Heart right ventricle (tissue), 16 donors: ENCODE measurements at regions of chr9 and their contacts with region 1.

Region 1: DNA sequence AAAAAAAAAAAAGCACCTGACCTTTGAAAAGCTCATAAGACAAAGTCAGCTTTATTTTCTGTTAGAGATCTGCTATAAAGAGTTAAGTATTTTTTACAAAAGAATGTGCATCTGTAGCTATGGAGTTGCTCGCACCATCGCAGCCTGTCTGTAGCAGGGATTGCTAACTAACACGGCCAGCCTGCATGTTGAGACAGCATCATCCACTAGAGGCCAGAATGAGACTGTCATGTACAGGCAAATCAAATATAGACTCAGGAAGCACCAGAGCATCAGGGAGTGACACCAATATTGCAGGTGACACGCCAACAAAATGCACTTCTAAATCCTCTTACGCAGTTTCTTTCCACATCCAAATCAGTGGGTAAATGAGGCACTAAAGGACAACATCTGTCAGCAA is 136.3 kb upstream of the RASEF start:
- DNase-seq: peak in 1 of 2 donors; percentile 51
- ATAC-seq: peak; percentile 85 to 94 (median 90)
- H3K4me3 ChIP-seq: no peak overlapping the region
- H3K27ac ChIP-seq: no peak overlapping the region
- H3K4me1 ChIP-seq: peaks cover 0 to 9% (median 0%) of the 10 kb centered on the region in 9 donors
- H3K27me3 ChIP-seq: peaks cover 0 to 21% (median 7%) of the 10 kb centered on the region in 7 donors
- CTCF ChIP-seq: peak; percentile 14 to 80 (median 64)

Region 2: GRCh38 chr9:83119873-83120272 is 79.4 kb before region 1 on chr9:
- intact Hi-C with region 1: no loop called
- DNase-seq: no peak
- ATAC-seq: no peak
- H3K4me3 ChIP-seq: no peak overlapping the region
- H3K27ac ChIP-seq: no peak overlapping the region
- H3K4me1 ChIP-seq: no peaks in the 10 kb centered on the region
- H3K27me3 ChIP-seq: no peaks in the 10 kb centered on the region
- CTCF ChIP-seq: no peak

Region 3: DNA sequence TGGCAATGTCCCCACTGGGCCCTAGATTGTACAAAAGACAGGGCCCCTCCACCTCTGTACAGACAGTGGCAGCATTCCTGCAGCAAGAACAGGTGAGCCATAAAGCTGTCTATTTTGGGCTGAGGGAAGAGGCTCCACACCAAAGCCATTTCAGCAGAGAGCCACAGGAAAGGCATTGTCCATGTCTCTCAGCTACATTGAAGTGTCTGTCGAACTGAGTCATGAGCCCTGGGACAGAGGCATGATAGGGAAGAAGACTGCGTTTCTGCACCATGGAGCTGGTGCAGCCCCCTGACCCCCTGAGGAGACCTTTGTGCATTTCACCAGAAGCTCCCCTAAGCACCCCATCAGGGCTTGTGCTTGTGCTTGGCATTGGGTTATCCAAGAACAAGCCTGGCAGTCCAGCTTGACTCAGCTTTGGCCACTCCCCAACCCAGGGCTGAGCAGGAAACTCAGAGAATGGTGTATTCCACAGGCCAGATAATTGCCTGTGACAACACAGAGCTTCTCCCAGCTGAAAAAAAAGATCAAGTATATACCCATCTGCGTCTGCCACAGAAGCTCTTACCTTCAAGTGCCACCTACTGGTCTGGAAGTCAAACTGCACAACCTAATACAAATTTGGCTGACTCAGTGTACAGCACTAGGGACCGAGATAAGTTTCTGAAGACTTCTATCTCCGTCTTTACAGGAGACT is 344.9 kb after region 1 on chr9:
- intact Hi-C with region 1: loop called in 3 of 10 experiments (anchors 5 to 10 kb)
- DNase-seq: peak; percentile 36 to 39
- ATAC-seq: peak; percentile 83 to 94 (median 87)
- H3K4me3 ChIP-seq: no peak overlapping the region
- H3K27ac ChIP-seq: no peak overlapping the region
- H3K4me1 ChIP-seq: peaks cover 0 to 15% (median 5%) of the 10 kb centered on the region in 9 donors
- H3K27me3 ChIP-seq: no peaks in the 10 kb centered on the region
- CTCF ChIP-seq: peak; percentile 59 to 82 (median 78)

Region 4: DNA sequence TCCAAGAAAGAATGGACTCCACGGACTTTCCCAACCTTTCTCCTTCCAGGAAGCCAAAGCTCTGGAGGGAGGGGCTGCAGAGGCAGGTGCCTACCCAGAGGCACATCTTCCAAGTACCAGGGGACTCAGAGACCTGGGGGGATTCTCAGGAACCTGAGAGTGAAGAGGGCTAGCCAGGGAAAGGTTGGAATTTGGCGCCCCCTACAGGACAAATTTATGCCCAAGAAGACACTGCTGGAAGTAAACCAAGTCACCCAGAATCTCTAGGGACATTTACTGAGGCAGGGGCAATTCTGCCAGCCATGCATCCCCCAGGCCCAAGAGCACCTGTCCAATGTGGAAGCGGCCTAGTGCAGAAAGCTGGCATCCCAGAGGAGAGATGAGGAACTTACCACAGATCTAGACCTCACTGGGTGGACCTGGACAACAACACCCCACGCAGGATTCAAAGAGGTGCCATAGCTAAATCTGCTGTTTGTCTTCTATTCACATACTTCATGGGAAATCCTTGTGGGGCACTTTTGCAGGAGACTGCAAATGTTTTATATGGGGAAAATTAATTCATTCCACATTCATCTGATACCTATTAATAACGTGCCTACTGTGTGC is 397.8 kb after region 1 on chr9:
- intact Hi-C with region 1: loop called in 1 of 10 experiments (anchors 5 kb)
- DNase-seq: peak in 1 of 2 donors; percentile 32
- ATAC-seq: peak in 2 of 8 donors; percentile 42 to 55
- H3K4me3 ChIP-seq: no peak overlapping the region
- H3K27ac ChIP-seq: no peak overlapping the region
- H3K4me1 ChIP-seq: peaks cover 0 to 11% (median 0%) of the 10 kb centered on the region in 9 donors
- H3K27me3 ChIP-seq: no peaks in the 10 kb centered on the region
- CTCF ChIP-seq: peak; percentile 51 to 80 (median 66)

Region 5: DNA sequence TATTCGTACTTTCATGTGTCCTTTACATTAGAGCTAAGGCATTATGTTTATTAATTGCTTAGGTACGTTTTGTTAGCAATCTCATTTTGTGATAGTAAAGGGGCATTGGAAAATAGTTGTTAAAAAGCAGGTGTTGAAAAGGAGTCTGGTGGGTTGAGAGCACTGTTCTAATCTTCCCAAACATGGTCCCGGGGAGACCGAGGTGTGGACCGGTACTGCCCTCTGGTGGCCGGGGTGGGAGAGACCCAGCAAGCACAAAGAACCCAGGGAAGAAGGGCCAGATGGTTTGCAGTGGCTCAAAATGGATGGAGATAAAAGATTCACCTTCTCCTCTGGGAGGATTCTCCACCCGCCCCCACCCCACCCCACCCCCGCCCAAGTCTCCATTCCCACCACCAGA is 449.8 kb after region 1 on chr9:
- intact Hi-C with region 1: loop called in 1 of 10 experiments (anchors 5 kb)
- DNase-seq: peak; percentile 58 to 75
- ATAC-seq: peak; percentile 65 to 89 (median 82)
- H3K4me3 ChIP-seq: no peak overlapping the region
- H3K27ac ChIP-seq: peak overlapping the region in 1 of 10 donors; percentile 37
- H3K4me1 ChIP-seq: peaks cover 0 to 11% (median 0%) of the 10 kb centered on the region in 9 donors
- H3K27me3 ChIP-seq: no peaks in the 10 kb centered on the region
- CTCF ChIP-seq: peak; percentile 54 to 78 (median 76)

Region 6: DNA sequence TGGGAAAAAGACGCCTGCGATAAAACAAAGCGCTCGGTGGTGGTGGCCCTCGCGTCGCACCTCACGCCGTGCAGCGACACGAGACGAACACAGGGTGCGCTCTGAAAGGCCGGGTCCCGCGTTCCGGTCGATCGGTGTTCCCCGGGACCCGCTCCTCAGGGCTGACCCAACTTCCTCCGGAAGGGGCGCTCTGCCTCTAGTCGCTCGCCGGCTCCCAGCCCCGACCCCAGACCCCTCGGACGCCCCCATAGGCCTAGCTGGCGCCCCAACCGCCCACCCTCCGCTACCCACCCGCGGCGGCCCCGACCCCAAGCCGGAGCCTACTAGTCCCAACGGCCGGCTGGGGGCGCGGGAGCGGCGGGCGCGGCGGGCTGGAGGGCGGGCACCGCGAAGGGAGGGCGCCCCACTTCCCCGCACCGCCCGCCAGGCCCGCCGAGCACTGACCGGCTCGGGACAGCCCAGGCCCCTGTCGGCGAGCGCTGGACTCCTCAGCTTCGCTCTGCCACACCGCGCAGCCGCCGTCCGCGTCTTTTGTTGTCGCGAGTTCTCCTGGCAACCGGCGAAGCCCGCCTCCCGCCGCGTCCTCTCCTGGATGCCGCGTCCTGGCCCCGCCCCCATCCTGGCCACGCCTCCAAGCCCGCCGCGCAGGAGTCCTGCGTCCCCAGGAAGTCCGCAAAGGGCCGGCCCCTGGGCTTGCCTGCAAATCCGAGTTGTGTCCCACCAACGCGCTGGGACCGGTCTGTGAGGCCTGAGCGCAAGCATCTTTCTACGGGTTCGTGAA is 721.9 kb after region 1 on chr9 and contains the start of gene KIF27:
- intact Hi-C with region 1: loop called in 1 of 10 experiments (anchors 10 kb)
- DNase-seq: peak; percentile 99 to 100
- ATAC-seq: peak; percentile 98 to 100 (median 99)
- H3K4me3 ChIP-seq: peak within 1 kb of the TSS; percentile 58 to 84 (median 78)
- H3K27ac ChIP-seq: peak within 1 kb of the TSS; percentile 50 to 96 (median 93)
- H3K4me1 ChIP-seq: peaks cover 0 to 16% (median 8%) of the 10 kb centered on the region in 9 donors
- H3K27me3 ChIP-seq: no peaks in the 10 kb centered on the region
- CTCF ChIP-seq: peak in 8 of 9 donors; percentile 14 to 64 (median 48)
- total RNA-seq, gene KIF27: 2.1 to 6.3 (median 3.2) TPM